Caco-2 (cell line): ENCODE measurements at regions of chr3 and their contacts with region 1.

Region 1: GRCh38 chr3:16550676-16551341 is 37.3 kb upstream of the RFTN1 start:
- DNase-seq: peak; percentile 80 to 85
- H3K4me3 ChIP-seq: no peak overlapping the region
- H3K4me3 Mint-ChIP-seq: no peak overlapping the region
- H3K27ac Mint-ChIP-seq: peak overlapping the region; percentile 83
- H3K4me1 ChIP-seq: peaks cover 7% of the 10 kb centered on the region; the same call in 1 of the 2 replicates
- H3K4me1 Mint-ChIP-seq: peaks cover 8% of the 10 kb centered on the region
- H3K27me3 ChIP-seq: no peaks in the 10 kb centered on the region
- H3K27me3 Mint-ChIP-seq: no peaks in the 10 kb centered on the region
- CTCF ChIP-seq: peak; percentile 83

Region 2: DNA sequence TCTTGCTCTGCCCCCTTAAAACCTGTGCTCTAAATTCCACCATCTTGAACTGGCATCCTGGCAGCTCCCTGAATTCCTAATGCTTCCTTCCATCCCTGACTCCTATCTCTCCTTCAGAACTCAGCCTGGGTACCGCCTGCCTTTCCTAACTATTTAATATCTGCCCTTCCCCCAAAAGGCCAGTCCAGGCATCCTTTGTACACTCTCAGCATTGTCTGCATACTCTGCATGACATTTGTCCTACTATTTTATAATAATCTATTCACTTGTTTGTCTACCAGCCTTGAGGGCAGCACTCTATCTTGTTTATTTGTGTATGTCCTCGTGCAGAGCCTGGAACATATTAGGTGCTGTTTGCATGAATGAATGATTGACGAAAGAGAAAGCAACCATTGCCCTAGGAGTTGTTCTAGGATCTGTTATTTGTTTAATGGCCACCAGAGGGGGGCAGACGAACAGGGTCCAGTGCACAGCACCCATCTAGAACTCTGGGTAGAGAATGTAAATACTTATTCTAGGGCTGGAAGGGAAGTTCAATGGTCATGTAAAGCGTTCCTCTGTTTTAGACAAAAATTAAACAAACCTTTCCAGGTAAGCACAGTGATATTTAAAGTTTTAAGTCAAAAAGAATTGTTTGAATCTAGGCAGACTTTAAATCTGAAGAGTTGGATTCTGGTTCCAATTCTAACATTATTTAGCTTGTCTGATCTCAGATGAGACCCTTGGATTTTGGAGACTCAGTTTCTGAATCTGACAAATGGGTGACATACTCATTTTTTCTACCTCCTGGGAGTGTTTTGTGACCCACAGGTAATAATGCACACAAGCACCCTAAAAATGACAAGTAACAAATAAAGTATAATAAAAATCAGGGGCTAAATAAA is 502.1 kb before region 1 on chr3:
- CTCF ChIA-PET with region 1: no interaction called
- POLR2A ChIA-PET with region 1: no interaction called
- intact Hi-C with region 1: loop called (anchors 2 kb)
- DNase-seq: peak; percentile 49 to 74
- H3K4me3 ChIP-seq: no peak overlapping the region
- H3K4me3 Mint-ChIP-seq: no peak overlapping the region
- H3K27ac Mint-ChIP-seq: no peak overlapping the region
- H3K4me1 ChIP-seq: no peaks in the 10 kb centered on the region
- H3K4me1 Mint-ChIP-seq: no peaks in the 10 kb centered on the region
- H3K27me3 ChIP-seq: no peaks in the 10 kb centered on the region
- H3K27me3 Mint-ChIP-seq: no peaks in the 10 kb centered on the region
- CTCF ChIP-seq: peak; percentile 75 to 79

Region 3: DNA sequence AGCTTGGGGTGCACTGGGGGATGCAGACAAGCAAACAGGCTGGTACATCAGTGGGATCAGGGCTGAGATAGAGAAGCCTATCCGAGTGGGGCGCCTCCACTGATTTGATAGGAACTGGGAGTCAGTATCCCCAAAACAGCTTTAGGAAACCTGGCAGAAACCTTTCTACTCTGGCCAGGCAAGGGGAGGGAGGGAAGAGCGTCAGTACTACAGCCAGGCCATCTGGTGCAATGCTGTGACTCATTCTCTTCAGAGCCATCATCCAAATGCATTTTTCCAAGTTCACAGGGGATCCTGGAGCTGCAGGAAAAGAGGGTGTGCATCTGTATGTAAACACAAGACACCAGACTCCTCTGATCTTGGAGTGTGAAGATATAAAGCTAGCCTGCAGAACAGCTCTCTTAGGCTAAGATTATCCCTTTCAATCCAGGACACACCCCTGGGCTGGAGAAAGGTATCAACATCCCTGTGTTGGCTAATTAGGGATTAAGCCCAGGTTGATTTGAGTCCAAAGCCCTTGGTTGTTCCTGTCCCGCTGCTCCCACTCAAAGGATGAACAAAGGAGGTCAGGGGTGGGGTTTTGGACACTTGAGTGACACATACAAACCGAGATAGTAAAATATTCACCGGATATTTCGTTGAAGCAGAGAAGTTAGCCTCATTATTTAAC is 367.1 kb before region 1 on chr3:
- CTCF ChIA-PET with region 1: no interaction called
- POLR2A ChIA-PET with region 1: no interaction called
- intact Hi-C with region 1: loop called (anchors 10 kb)
- DNase-seq: no peak
- H3K4me3 ChIP-seq: no peak overlapping the region
- H3K4me3 Mint-ChIP-seq: no peak overlapping the region
- H3K27ac Mint-ChIP-seq: no peak overlapping the region
- H3K4me1 ChIP-seq: no peaks in the 10 kb centered on the region
- H3K4me1 Mint-ChIP-seq: no peaks in the 10 kb centered on the region
- H3K27me3 ChIP-seq: no peaks in the 10 kb centered on the region
- H3K27me3 Mint-ChIP-seq: peaks cover 8% of the 10 kb centered on the region
- CTCF ChIP-seq: no peak

Region 4: GRCh38 chr3:16264708-16265454 is 285.9 kb before region 1 on chr3 and contains the starts of genes DPH3 and OXNAD1:
- CTCF ChIA-PET with region 1: interaction called, 5 read pairs
- POLR2A ChIA-PET with region 1: no interaction called
- intact Hi-C with region 1: loop called (anchors 1 kb)
- DNase-seq: peak; percentile 99
- H3K4me3 ChIP-seq: peak within 1 kb of the TSS; percentile 76
- H3K4me3 Mint-ChIP-seq: peak within 1 kb of the TSS; percentile 76
- H3K27ac Mint-ChIP-seq: peak within 1 kb of the TSS; percentile 71
- H3K4me1 ChIP-seq: peaks cover 5% of the 10 kb centered on the region
- H3K4me1 Mint-ChIP-seq: peaks cover 14% of the 10 kb centered on the region
- H3K27me3 ChIP-seq: no peaks in the 10 kb centered on the region
- H3K27me3 Mint-ChIP-seq: no peaks in the 10 kb centered on the region
- CTCF ChIP-seq: no peak
- total RNA-seq, gene DPH3: 25.6 and 30.0 TPM in 2 replicates
- total RNA-seq, gene OXNAD1: 20.0 and 22.9 TPM in 2 replicates

Region 5: DNA sequence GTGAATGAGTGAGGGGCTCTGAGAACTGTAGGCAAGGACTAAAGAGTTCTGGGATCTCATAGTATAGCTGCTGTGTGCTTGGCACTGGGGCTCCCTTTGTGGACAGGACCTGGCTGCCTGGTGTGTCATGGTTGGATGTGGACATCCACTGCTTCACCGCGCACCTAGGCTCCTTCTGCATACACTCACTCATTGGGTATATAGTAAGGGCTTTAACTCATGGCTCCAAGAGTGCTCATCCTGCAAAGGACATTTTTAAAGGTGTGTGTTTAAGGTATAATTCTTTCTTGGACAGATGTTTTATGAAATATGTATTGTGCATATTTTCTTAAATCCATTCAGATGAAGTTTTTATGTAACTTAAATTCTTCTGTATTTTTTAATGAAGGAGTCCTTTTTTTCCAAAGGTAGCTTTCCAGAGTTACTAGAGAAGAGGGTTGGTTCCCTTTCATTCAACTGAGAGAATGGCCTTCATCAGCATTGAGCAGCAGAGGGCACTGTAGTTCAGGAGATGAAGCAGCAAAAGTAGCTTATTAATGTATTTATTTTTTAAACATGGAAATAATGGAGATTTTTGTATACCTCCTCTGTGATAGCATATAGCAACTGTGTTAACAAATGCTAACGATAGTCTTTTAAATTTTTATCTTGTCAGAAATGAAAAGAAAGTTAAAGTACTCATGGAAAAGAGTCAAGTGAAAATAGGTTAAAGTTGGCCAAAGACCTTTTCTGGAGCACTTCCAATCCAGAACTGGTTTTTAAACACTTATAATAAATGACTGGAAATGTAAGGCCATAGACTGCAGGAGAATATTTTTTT is 260.6 kb before region 1 on chr3:
- CTCF ChIA-PET with region 1: interaction called, 16 read pairs
- POLR2A ChIA-PET with region 1: no interaction called
- intact Hi-C with region 1: loop called (anchors 1 kb)
- DNase-seq: peak in 1 of 2 experiments; percentile 50
- H3K4me3 ChIP-seq: no peak overlapping the region
- H3K4me3 Mint-ChIP-seq: no peak overlapping the region
- H3K27ac Mint-ChIP-seq: no peak overlapping the region
- H3K4me1 ChIP-seq: peaks cover 6% of the 10 kb centered on the region; the same call in 1 of the 2 replicates
- H3K4me1 Mint-ChIP-seq: peaks cover 10% of the 10 kb centered on the region
- H3K27me3 ChIP-seq: no peaks in the 10 kb centered on the region
- H3K27me3 Mint-ChIP-seq: no peaks in the 10 kb centered on the region
- CTCF ChIP-seq: peak; percentile 73 to 77

Region 6: GRCh38 chr3:16516695-16517481 is 33.9 kb before region 1 on chr3:
- CTCF ChIA-PET with region 1: no interaction called
- POLR2A ChIA-PET with region 1: no interaction called
- intact Hi-C with region 1: loop called (anchors 1 kb)
- DNase-seq: peak in 1 of 2 experiments; percentile 58
- H3K4me3 ChIP-seq: no peak overlapping the region
- H3K4me3 Mint-ChIP-seq: no peak overlapping the region
- H3K27ac Mint-ChIP-seq: no peak overlapping the region
- H3K4me1 ChIP-seq: peaks cover 7% of the 10 kb centered on the region; the same call in 1 of the 2 replicates
- H3K4me1 Mint-ChIP-seq: no peaks in the 10 kb centered on the region
- H3K27me3 ChIP-seq: no peaks in the 10 kb centered on the region
- H3K27me3 Mint-ChIP-seq: peaks cover 6% of the 10 kb centered on the region
- CTCF ChIP-seq: peak; percentile 53 to 68

Region 7: GRCh38 chr3:16675805-16676204 is 125.0 kb after region 1 on chr3:
- CTCF ChIA-PET with region 1: no interaction called
- POLR2A ChIA-PET with region 1: no interaction called
- intact Hi-C with region 1: no loop called
- DNase-seq: no peak
- H3K4me3 ChIP-seq: no peak overlapping the region
- H3K4me3 Mint-ChIP-seq: no peak overlapping the region
- H3K27ac Mint-ChIP-seq: no peak overlapping the region
- H3K4me1 ChIP-seq: no peaks in the 10 kb centered on the region
- H3K4me1 Mint-ChIP-seq: no peaks in the 10 kb centered on the region
- H3K27me3 ChIP-seq: no peaks in the 10 kb centered on the region
- H3K27me3 Mint-ChIP-seq: peaks cover 5% of the 10 kb centered on the region
- CTCF ChIP-seq: no peak